Activated T-helper 1 cell treated with anti-CD3 and anti-CD28 coated beads, Interleukin-12 subunit alpha, Interleukin-12 subunit beta, Interleukin-2, Interleukin-4 antibody, amounts not matched to agents 30 ng/mL and 10 ng/mL and 1 ng/mL, durations not matched to agents 14 hours and 24 hours and 36 hours (primary cell): ENCODE measurements at regions of chr1 and their contacts with region 1.

Region 1: GRCh38 chr1:151968058-151968457 is 25.6 kb downstream of the S100A10 start:
- DNase-seq: peak; percentile 45
- H3K4me3 Mint-ChIP-seq: no peak overlapping the region
- H3K27ac Mint-ChIP-seq: no peak overlapping the region
- H3K4me1 Mint-ChIP-seq: peaks cover 35% of the 10 kb centered on the region
- H3K27me3 Mint-ChIP-seq: peaks cover 9% of the 10 kb centered on the region

Region 2: DNA sequence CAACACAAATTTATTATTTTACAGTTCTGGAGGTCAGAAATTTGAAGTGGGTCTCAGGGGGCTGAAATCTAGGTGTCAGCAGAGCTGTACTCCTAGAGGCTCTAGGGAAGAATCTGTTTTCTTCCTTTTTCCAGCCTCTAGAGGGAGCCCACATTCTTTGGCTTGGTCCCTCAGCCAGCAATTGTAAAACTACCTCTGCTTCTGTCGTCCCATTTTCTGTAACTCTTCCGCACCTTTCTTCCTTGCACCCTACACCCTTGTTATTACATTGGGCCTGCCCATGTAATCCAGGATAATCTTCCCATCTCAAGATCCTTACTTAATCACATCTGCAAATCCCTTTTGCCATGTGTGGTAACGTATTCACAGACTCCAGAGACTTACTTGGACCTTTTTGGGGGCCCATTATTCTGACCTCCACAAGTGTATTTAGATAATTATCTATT is 34.0 kb before region 1 on chr1:
- intact Hi-C with region 1: loop called (anchors 1 kb)
- DNase-seq: peak; percentile 32
- H3K4me3 Mint-ChIP-seq: no peak overlapping the region
- H3K27ac Mint-ChIP-seq: no peak overlapping the region
- H3K4me1 Mint-ChIP-seq: peaks cover 9% of the 10 kb centered on the region
- H3K27me3 Mint-ChIP-seq: peaks cover 12% of the 10 kb centered on the region

Region 3: DNA sequence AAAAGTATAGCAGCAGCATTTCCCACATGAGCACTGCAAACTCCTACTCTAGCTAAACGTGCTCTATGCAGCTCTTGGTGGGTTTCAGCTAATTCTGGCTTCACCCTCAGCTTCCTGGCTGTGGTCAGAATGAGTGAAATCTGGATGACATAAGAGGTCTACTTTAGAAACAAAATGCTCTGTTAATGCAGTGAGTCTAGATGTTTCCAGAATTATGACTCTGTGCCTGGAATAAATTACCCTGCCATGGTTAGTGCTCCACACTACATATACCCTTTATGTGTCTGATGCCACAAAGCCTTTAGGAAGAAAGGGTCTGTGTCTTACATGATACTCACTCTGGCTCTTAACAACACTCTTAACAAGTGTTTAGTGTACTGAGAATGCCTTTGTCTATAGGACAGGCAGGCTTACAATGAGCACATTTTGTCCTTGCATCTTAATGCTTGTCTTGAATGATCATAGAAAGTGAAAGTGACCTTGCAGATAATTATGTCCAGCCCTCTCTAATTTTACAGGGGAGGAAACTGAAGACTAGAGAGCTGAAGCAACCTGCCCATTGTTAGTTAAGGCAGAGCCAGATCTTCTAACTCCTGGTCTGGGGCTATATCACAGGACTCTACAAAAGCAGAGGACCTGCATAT is 16.4 kb after region 1 on chr1:
- intact Hi-C with region 1: loop called (anchors 1 kb)
- DNase-seq: peak; percentile 39
- H3K4me3 Mint-ChIP-seq: peak overlapping the region; percentile 64
- H3K27ac Mint-ChIP-seq: peak overlapping the region; percentile 90
- H3K4me1 Mint-ChIP-seq: peaks cover 61% of the 10 kb centered on the region
- H3K27me3 Mint-ChIP-seq: peaks cover 3% of the 10 kb centered on the region

Region 4: DNA sequence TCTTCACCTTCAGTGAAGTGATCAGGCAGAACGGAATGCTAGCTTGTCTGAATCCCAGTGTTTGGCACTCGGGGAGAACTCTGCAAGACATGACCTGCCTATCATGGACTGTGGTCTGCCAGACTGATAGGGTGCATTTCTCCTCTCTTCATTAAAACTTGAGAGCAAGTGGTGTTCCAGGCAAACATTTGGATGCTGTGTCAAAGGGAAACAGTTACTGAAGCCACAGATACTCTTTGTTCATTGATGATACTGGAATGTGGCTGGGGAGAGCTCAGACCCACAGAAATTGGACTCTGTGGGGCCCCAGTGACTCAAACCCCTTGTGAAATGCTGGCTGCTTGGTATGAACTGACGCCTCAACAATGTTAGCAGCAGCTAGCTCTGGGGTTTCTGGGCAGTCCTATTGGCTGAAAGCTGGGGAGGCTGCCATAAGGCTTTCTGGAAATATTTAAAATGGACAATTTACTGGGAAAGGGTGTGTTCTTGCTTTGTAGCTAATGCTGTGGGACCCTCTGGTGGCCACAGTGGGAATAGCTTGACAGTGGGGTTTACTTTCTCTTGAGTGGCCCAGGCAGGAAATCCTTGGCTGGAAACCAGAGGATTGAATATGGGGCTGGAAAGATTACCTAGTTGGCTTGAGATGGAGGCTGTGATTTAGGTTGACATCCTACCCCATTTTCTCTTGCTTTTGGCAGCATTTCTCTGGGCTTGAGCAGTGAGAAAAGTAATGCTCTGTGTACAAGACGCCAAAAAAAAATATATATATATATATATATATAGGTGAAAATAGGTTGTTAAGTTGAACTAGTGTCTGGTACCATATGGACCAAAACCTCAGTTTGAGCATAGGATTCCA is 33.6 kb after region 1 on chr1:
- intact Hi-C with region 1: loop called (anchors 1 kb)
- DNase-seq: peak; percentile 50
- H3K4me3 Mint-ChIP-seq: no peak overlapping the region
- H3K27ac Mint-ChIP-seq: no peak overlapping the region
- H3K4me1 Mint-ChIP-seq: peaks cover 7% of the 10 kb centered on the region
- H3K27me3 Mint-ChIP-seq: peaks cover 35% of the 10 kb centered on the region

Region 5: DNA sequence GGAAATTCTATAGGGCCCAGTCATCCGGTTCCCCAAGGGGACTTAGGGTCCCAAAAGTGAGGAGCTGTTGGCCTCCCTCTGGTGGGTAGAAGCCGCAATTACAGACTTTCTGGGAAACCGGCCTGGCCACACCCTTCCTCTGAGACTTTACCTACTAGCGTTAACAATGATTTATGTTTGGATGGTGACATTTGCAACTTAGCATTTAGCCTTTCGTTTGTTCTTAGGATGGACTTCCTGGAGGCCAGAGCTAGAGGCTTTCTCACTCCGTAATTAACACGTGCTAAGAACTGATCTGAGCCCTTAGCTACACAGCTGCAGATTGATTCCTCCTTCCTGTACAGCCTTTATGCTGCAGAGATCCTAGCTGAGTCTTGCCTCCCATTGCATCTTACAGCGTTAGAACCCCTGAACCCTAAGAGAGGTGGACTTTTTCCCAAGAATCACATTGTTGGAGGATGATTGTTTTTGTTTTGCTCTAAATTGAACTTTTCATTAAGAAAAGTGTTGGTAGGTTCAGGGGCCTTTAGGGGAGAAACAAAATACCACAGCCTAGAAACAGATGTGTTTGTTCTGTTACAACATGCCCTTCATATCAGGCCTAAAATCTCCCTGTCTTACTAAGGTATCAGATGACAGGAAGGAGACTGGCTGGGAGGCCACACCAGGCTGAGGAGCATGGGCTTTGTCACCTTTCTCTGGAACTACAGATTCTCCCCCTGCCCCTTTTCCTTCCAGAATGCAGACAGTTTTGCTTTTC is 66.8 kb after region 1 on chr1:
- intact Hi-C with region 1: loop called (anchors 1 kb)
- DNase-seq: peak; percentile 65
- H3K4me3 Mint-ChIP-seq: peak overlapping the region; percentile 96
- H3K27ac Mint-ChIP-seq: peak overlapping the region; percentile 94
- H3K4me1 Mint-ChIP-seq: peaks cover 41% of the 10 kb centered on the region
- H3K27me3 Mint-ChIP-seq: no peaks in the 10 kb centered on the region